Common myeloid progenitor, CD34-positive (primary cell): ENCODE measurements at regions of chr10 and their contacts with region 1.

Region 1: GRCh38 chr10:63217120-63217605 is 84.0 kb downstream of the NRBF2 start:
- DNase-seq: peak; percentile 67 to 71 (median 69)
- H3K4me3 ChIP-seq: no peak overlapping the region
- H3K27ac ChIP-seq: peak overlapping the region in 1 of 2 experiments; percentile 45
- H3K4me1 ChIP-seq: peaks cover 0 to 25% (median 7%) of the 10 kb centered on the region in 4 experiments
- H3K27me3 ChIP-seq: no peaks in the 10 kb centered on the region

Region 2: DNA sequence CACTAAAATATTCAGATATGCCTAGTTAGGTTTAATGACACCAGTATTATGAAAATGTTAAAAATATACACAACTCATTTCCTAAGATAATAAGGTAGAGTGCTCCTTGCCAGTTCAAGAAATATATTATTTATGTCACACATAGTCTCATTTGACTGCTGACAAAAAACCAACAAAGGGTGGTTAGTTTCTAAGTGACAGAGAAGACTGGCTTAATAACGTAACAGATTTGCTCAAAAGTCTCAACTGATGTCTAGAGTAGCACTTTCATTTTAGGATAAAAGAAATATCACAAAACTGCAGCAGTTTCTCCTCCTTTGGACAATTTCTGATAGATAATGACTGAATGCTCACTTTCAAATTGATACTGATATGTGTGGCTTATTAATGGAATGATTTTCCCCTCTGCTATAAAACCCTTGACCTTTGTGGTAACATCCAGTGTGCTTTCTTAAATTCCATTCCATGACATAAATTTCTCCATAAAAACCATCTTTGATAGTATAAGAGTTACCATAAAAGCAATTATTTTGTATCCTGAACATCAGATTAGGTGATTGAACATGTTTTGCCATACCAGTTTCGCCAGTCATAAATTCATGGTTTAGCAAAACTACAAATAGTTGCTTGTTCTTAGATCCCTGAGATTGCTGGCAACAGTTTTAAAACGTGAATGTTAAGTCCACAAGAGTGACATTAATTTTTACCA is 10.2 kb after region 1 on chr10:
- CTCF ChIA-PET with region 1: interaction called, 12 read pairs
- POLR2A ChIA-PET with region 1: no interaction called
- DNase-seq: peak in 2 of 3 donors; percentile 19 to 33
- H3K4me3 ChIP-seq: peak overlapping the region in 1 of 7 experiments; percentile 23
- H3K27ac ChIP-seq: peak overlapping the region in 1 of 2 experiments; percentile 51
- H3K4me1 ChIP-seq: peaks cover 4 to 26% (median 12%) of the 10 kb centered on the region in 4 experiments
- H3K27me3 ChIP-seq: no peaks in the 10 kb centered on the region

Region 3: DNA sequence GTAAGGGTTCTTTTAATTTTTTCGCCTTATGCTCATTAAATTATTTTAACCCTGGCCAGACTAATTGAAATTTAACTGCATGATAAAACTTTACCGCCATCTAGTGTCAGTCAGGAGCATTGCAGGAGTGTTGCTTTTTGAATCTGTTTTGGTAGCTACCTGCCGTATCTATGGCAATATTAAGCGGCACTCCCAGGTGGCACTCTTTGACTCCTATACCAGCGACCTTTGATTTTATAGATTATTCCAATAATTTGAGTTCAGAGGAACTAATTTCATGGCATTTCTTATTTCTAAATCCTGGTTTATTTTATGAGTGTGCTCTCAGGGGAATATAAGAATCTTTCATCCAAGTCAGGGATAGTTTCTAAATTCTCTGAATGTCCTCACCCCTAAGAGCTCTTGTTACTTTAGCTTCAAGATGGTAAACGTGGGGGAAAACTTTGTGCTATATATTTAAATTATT is 502.9 kb after region 1 on chr10:
- CTCF ChIA-PET with region 1: interaction called, 26 read pairs
- POLR2A ChIA-PET with region 1: interaction called, 4 read pairs
- DNase-seq: peak; percentile 56 to 73 (median 69)
- H3K4me3 ChIP-seq: no peak overlapping the region
- H3K27ac ChIP-seq: no peak overlapping the region
- H3K4me1 ChIP-seq: peaks cover 0 to 6% (median 0%) of the 10 kb centered on the region in 4 experiments
- H3K27me3 ChIP-seq: peaks cover 0 to 4% (median 0%) of the 10 kb centered on the region in 5 experiments